ENCODE measurements at regions of chr17 and their contacts with region 1.

Region 1: GRCh38 chr17:55527540-55528118 is 16.4 kb upstream of the SMIM36 start:
- DNase-seq: no peak
- ATAC-seq: no peak
- H3K4me3 ChIP-seq: no peak overlapping the region
- H3K4me3 Mint-ChIP-seq: no peak overlapping the region
- H3K27ac ChIP-seq: no peak overlapping the region
- H3K27ac Mint-ChIP-seq: no peak overlapping the region
- H3K4me1 ChIP-seq: no peaks in the 10 kb centered on the region
- H3K4me1 Mint-ChIP-seq: no peaks in the 10 kb centered on the region
- H3K27me3 ChIP-seq: peaks cover 0 to 4% of the 10 kb centered on the region in 2 experiments
- H3K27me3 Mint-ChIP-seq: peaks cover 0 to 4% of the 10 kb centered on the region in 2 donors

Region 2: DNA sequence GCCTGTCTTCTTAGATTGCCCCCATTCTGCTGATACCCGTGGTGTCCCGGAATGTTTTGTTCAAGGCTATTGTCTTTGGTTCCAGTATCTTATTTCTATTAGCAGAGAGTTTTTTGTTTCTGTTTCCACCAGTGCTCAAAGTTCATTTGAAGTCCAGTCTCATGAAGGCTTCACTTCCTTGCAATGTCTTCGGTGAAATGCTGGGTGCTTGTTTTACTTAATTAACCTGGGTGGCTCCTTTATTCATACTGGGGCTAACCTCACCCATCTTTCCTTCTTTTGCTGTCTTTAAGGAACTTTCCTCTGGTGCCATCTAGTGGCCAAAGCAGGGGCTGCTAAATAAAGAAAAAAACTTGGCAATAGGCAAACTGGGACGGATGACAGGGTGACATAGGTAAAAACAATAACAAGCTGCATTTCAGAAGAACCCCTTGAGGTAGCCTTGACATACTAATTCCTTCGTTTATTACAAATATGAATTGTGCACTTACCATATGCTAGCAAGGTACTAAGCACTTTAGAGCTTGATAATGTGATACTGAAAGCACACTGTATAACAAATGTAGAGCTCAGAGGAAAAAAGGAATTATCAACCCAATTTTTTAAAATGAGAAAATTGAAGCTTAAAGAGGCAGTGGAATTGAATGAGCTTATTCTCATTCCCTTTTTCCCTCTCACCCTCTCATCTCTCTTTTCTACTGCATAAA is 13.6 kb before region 1 on chr17:
- CTCF ChIA-PET with region 1: interaction called, 5 to 12 read pairs
- POLR2A ChIA-PET with region 1: no interaction called
- DNase-seq: peak; percentile 8 to 80 (median 53)
- ATAC-seq: peak; percentile 37 to 57 (median 49)
- H3K4me3 ChIP-seq: no peak overlapping the region
- H3K4me3 Mint-ChIP-seq: no peak overlapping the region
- H3K27ac ChIP-seq: no peak overlapping the region
- H3K27ac Mint-ChIP-seq: no peak overlapping the region
- H3K4me1 ChIP-seq: no peaks in the 10 kb centered on the region
- H3K4me1 Mint-ChIP-seq: peaks cover 0 to 2% (median 0%) of the 10 kb centered on the region in 3 donors
- H3K27me3 ChIP-seq: peaks cover 0 to 2% of the 10 kb centered on the region in 2 experiments
- H3K27me3 Mint-ChIP-seq: peaks cover 4 to 7% of the 10 kb centered on the region in 2 donors

Region 3: GRCh38 chr17:55601874-55602364 is 74.3 kb after region 1 on chr17:
- CTCF ChIA-PET with region 1: interaction called, 34 to 44 read pairs
- POLR2A ChIA-PET with region 1: no interaction called
- DNase-seq: peak in 6 of 35 experiments; percentile 2 to 57 (median 8)
- ATAC-seq: peak in 2 of 4 experiments; percentile 38 to 65
- H3K4me3 ChIP-seq: no peak overlapping the region
- H3K4me3 Mint-ChIP-seq: no peak overlapping the region
- H3K27ac ChIP-seq: no peak overlapping the region
- H3K27ac Mint-ChIP-seq: no peak overlapping the region
- H3K4me1 ChIP-seq: no peaks in the 10 kb centered on the region
- H3K4me1 Mint-ChIP-seq: no peaks in the 10 kb centered on the region
- H3K27me3 ChIP-seq: peaks cover 0 to 3% of the 10 kb centered on the region in 2 experiments
- H3K27me3 Mint-ChIP-seq: peaks cover 9 to 11% of the 10 kb centered on the region in 2 donors

Region 4: GRCh38 chr17:55717898-55718735 is 190.5 kb after region 1 on chr17:
- CTCF ChIA-PET with region 1: interaction called, 6 to 29 read pairs
- POLR2A ChIA-PET with region 1: no interaction called
- DNase-seq: peak in 33 of 35 experiments; percentile 3 to 66 (median 41)
- ATAC-seq: no peak
- H3K4me3 ChIP-seq: no peak overlapping the region
- H3K4me3 Mint-ChIP-seq: no peak overlapping the region
- H3K27ac ChIP-seq: no peak overlapping the region
- H3K27ac Mint-ChIP-seq: no peak overlapping the region
- H3K4me1 ChIP-seq: no peaks in the 10 kb centered on the region
- H3K4me1 Mint-ChIP-seq: no peaks in the 10 kb centered on the region
- H3K27me3 ChIP-seq: peaks cover 0 to 7% of the 10 kb centered on the region in 2 experiments
- H3K27me3 Mint-ChIP-seq: peaks cover 17 to 19% of the 10 kb centered on the region in 2 donors

Measured in T-cell (primary cell).